Activated CD4-positive, alpha-beta T cell treated with anti-CD3 and anti-CD28 coated beads for 36 hours (primary cell): ENCODE measurements at regions of chr2 and their contacts with region 1.

Region 1: DNA sequence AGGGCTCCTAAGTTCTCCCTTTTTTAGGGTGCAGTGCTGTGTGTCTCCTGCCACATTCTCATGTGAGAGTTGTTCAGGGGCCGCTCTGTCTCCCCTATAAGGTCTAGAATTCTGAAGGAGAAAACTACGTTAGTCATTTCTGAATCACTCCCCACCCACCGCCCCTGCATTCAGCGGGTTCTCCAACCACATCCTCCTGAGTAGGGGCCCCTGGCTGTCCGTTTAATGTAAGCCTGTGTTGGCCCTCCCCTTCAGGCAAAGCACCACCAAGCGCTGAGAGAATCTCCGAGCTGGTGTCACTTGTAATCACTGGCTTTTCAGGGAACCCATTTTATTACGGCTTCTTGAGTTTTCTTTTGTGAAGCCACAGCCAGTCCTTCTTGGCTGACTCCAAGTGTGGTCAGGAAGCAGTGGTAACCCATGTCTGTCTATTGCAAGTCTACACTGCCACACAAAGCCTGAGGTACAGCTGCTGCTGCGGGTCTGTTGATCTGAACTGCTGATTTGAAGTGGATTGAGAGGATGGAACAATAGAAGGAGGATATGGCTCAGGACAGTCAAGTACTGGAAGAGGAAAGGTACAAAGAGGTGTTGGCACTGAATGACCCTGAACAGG is 16.9 kb downstream of the LCT start:
- DNase-seq: peak; percentile 94
- ATAC-seq: peak; percentile 93
- H3K4me3 Mint-ChIP-seq: peak overlapping the region; percentile 71
- H3K27ac Mint-ChIP-seq: peak overlapping the region; percentile 87
- H3K4me1 Mint-ChIP-seq: peaks cover 45% of the 10 kb centered on the region
- H3K27me3 Mint-ChIP-seq: no peaks in the 10 kb centered on the region

Region 2: DNA sequence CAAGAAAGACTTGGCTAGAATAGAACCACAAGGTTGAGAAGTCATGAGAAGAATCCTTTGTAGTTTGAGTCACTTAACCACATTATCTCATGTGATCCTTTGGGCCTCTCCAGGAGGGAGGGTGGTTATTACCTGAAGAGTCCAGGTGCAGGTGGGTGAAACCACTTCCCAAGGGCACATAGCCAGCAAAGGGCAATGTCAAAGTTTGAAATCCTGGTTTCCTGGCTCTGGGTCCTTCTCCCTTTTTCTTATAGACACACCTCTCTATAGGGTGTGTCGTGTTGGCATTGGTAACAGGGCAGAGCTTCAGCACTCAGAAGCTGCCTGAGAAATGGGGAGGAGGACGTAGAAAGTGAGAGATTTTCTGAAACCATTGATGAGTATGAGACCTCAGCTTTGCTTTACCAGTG is 1428.4 kb before region 1 on chr2:
- CTCF ChIA-PET with region 1: no interaction called
- POLR2A ChIA-PET with region 1: no interaction called
- intact Hi-C with region 1: no loop called
- DNase-seq: no peak
- ATAC-seq: peak; percentile 74
- H3K4me3 Mint-ChIP-seq: no peak overlapping the region
- H3K27ac Mint-ChIP-seq: no peak overlapping the region
- H3K4me1 Mint-ChIP-seq: peaks cover 19% of the 10 kb centered on the region
- H3K27me3 Mint-ChIP-seq: no peaks in the 10 kb centered on the region

Region 3: DNA sequence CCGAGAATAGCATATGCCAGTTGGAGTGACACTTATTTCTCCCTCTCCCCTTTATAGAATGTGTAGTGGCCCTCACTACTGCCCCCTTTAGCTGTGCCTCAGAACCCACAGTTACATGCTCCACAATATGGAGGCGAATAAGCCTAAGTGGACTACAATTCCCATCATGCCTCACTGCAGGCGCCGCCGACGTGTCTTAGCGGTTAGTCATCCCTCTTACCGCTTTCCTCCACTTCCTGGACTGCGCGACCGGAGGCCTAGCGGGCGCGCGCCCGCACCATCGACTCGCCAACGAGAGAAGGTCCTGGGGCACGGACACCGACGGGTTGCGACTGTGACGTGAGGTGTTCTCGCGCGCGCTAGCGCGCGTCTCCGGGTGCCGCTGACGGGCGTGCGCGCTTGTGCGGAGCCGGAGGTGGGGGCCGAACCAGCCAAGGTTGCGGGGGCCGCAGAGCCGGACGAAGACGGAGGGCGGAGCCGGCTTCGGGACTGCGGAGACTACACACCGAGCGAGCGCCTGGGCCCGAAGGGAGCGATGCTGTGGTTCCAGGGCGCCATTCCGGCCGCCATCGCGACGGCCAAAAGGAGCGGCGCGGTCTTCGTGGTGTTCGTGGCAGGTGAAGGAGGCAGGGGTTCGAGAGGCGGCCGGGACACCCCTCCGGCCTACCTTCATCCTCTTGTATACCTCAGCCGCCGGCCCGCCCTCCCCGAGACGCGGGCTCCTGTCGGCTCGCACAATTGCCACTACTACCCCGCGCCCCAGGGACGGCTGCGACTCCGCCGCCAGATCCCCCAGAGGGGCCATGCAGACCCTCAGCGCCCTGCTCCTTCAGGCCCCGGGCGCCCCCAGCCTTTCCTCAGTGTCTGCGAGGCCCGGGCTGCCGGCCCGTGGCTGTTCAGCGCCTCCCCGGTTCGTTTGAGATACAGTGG is 78.5 kb before region 1 on chr2 and contains the start of gene UBXN4:
- CTCF ChIA-PET with region 1: interaction called, 3 read pairs
- POLR2A ChIA-PET with region 1: no interaction called
- intact Hi-C with region 1: loop called (anchors 2 kb)
- DNase-seq: peak; percentile 98
- ATAC-seq: peak; percentile 93
- H3K4me3 Mint-ChIP-seq: peak within 1 kb of the TSS; percentile 97
- H3K27ac Mint-ChIP-seq: peak within 1 kb of the TSS; percentile 99
- H3K4me1 Mint-ChIP-seq: peaks cover 35% of the 10 kb centered on the region
- H3K27me3 Mint-ChIP-seq: no peaks in the 10 kb centered on the region
- total RNA-seq, gene UBXN4: 97.0 to 104 TPM